Activated CD8-positive, alpha-beta T cell treated with anti-CD3 and anti-CD28 coated beads for 36 hours (primary cell): ENCODE measurements at regions of chr15 and their contacts with region 1.

Region 1: GRCh38 chr15:97692301-97693015 is 268.0 kb upstream of the ARRDC4 start:
- DNase-seq: no peak
- ATAC-seq: no peak
- H3K4me3 Mint-ChIP-seq: no peak overlapping the region
- H3K27ac Mint-ChIP-seq: no peak overlapping the region
- H3K4me1 Mint-ChIP-seq: no peaks in the 10 kb centered on the region
- H3K27me3 Mint-ChIP-seq: no peaks in the 10 kb centered on the region
- CTCF ChIP-seq: no peak

Region 2: GRCh38 chr15:97592630-97593173 is 99.8 kb before region 1 on chr15:
- CTCF ChIA-PET with region 1: no interaction called
- POLR2A ChIA-PET with region 1: no interaction called
- intact Hi-C with region 1: no loop called
- DNase-seq: no peak
- ATAC-seq: no peak
- H3K4me3 Mint-ChIP-seq: no peak overlapping the region
- H3K27ac Mint-ChIP-seq: no peak overlapping the region
- H3K4me1 Mint-ChIP-seq: no peaks in the 10 kb centered on the region
- H3K27me3 Mint-ChIP-seq: no peaks in the 10 kb centered on the region
- CTCF ChIP-seq: no peak

Region 3: GRCh38 chr15:97623091-97623661 is 69.3 kb before region 1 on chr15:
- CTCF ChIA-PET with region 1: no interaction called
- POLR2A ChIA-PET with region 1: no interaction called
- intact Hi-C with region 1: loop called (anchors 10 kb)
- DNase-seq: no peak
- ATAC-seq: no peak
- H3K4me3 Mint-ChIP-seq: no peak overlapping the region
- H3K27ac Mint-ChIP-seq: no peak overlapping the region
- H3K4me1 Mint-ChIP-seq: no peaks in the 10 kb centered on the region
- H3K27me3 Mint-ChIP-seq: no peaks in the 10 kb centered on the region
- CTCF ChIP-seq: no peak